ENCODE measurements at regions of chr4 and their contacts with region 1.

Region 1: DNA sequence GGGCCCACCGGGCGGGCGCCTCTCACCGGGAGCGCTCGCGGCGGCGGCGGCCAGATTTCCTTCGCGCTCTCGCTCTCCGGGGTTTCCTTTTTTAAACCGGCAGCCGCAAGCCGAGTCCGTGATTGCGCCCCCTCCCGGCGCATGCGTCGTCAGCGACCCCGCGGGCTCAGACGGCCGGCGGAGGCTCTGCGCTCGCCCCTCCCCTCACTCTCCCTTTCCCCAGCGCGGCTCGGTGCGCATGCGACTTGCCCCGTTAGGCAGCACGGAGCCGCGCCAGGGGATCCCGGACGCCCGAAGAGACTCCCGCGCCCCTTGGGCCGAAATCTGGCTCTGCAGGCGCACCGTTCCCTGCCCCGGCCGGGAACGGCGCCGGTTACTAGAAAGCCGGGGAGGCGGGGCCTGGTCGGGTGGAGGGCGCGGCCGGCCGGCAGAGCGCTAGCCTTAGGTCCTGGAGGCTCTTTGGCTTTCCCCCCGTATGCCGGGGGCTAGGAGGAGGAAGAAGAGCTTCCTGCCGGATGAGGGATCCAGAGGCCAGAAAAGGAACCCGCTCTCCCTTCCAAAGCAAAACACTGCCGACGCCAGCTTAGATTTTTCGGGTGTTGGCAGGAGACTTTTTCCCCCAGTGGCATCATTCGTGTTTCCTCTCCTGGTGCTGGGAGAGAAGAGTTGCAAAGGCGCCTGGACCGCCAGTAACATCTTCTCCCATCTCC is at the start of gene CLOCK:
- DNase-seq: peak; percentile 88 to 96 (median 92)
- ATAC-seq: peak; percentile 87
- H3K4me3 ChIP-seq: peak within 1 kb of the TSS; percentile 74 to 81
- H3K27ac ChIP-seq: peak within 1 kb of the TSS; percentile 93 to 99
- H3K4me1 ChIP-seq: peaks cover 4 to 18% of the 10 kb centered on the region in 2 donors
- H3K27me3 ChIP-seq: no peaks in the 10 kb centered on the region
- CTCF ChIP-seq: peak; percentile 35 to 70
- polyA plus RNA-seq, gene CLOCK: 19.8 to 22.0 (median 21.5) TPM

Region 2: DNA sequence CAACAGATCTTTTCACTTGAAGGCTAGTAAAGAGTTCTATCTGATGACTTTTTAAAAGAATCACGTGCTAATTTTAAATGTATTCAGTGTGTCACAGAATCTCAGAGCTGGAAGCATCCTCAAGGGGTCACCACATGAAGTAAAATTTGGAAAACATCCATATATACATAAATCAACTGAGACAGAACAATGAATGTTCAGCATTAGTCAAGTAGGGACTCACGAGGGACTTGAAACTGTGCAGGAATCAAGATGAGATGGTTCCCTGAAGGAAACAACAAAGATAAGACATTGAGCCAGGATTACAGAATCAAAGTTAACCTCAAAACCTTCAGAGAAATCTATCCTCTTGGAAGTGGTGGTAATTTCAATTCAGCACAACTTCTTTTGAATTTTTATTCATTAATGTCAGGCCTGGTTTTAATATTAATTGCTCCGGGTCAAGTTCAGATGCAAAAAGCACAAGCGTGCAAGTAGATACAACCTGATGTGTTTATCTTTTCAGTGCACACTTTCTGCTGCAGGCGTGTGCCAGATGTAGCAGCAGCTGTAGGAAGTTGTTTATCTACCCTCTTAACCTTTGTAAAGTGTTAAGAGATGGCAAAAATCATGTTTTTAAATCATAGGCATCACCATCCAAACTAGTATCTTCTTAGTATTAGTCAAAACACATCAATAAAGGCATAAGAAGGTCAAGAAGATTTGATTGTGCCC is 288.6 kb before region 1 on chr4:
- intact Hi-C with region 1: no loop called
- DNase-seq: no peak
- ATAC-seq: no peak
- H3K4me3 ChIP-seq: no peak overlapping the region
- H3K27ac ChIP-seq: no peak overlapping the region
- H3K4me1 ChIP-seq: no peaks in the 10 kb centered on the region
- H3K27me3 ChIP-seq: no peaks in the 10 kb centered on the region
- CTCF ChIP-seq: no peak

Region 3: GRCh38 chr4:55345980-55346850 is 200.7 kb before region 1 on chr4 and contains the start of gene SRD5A3:
- intact Hi-C with region 1: loop called in 1 of 2 experiments (anchors 10 kb)
- DNase-seq: peak; percentile 80 to 98 (median 89)
- ATAC-seq: peak; percentile 99
- H3K4me3 ChIP-seq: peak within 1 kb of the TSS; percentile 59 to 60
- H3K27ac ChIP-seq: peak within 1 kb of the TSS; percentile 97 to 98
- H3K4me1 ChIP-seq: peaks cover 11 to 29% of the 10 kb centered on the region in 2 donors
- H3K27me3 ChIP-seq: no peaks in the 10 kb centered on the region
- CTCF ChIP-seq: peak; percentile 95 to 96
- polyA plus RNA-seq, gene SRD5A3: 12.1 to 19.7 (median 15.2) TPM